Mammary epithelial cell (primary cell): ENCODE measurements at regions of chr2 and their contacts with region 1.

Region 1: DNA sequence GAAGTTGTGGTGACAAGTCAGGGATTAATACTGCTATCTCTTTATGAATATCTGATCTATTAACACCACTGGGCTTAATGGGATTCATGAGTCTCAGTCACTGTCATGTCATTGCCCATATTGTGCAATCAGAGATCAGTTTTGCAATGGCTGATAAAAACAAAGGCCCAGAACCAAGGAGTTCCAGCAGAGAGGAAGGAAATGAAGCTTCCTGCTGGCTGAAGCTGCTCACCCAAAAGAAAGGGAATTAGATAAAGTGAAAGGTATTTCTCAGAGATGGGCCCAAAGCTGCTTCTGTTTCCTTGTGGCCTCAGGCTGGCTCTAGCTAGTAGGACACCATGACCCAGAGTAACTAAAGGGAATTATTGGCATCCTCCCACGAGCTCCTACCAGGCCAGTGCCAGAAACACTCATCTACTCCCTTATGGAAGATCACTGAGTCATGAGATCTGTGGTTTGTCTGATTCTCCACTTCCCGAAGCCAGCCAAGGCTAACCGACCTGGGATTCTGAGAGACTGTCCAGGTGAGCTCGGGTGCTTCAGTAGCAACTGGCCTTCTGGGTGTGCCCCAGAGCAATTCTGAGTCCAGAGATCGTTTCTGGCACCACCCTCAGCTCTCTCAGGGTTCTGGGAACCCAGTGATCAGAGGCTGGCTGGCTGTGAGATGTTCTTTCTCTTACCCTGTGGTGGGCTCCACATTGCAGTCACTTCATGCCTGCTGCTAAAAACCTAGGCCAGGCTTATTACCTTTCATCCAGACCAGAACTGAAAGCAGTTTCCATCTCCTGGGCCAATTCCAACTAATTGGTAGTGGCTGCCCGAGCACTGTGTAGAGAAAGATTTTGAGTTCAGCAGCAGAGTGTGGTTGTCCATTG is 129.5 kb upstream of the PELI1 start:
- DNase-seq: peak; percentile 96
- H3K4me3 ChIP-seq: no peak overlapping the region
- H3K27ac ChIP-seq: peak overlapping the region; percentile 85
- H3K4me1 ChIP-seq: peaks cover 53% of the 10 kb centered on the region
- H3K27me3 ChIP-seq: no peaks in the 10 kb centered on the region
- CTCF ChIP-seq: no peak

Region 2: DNA sequence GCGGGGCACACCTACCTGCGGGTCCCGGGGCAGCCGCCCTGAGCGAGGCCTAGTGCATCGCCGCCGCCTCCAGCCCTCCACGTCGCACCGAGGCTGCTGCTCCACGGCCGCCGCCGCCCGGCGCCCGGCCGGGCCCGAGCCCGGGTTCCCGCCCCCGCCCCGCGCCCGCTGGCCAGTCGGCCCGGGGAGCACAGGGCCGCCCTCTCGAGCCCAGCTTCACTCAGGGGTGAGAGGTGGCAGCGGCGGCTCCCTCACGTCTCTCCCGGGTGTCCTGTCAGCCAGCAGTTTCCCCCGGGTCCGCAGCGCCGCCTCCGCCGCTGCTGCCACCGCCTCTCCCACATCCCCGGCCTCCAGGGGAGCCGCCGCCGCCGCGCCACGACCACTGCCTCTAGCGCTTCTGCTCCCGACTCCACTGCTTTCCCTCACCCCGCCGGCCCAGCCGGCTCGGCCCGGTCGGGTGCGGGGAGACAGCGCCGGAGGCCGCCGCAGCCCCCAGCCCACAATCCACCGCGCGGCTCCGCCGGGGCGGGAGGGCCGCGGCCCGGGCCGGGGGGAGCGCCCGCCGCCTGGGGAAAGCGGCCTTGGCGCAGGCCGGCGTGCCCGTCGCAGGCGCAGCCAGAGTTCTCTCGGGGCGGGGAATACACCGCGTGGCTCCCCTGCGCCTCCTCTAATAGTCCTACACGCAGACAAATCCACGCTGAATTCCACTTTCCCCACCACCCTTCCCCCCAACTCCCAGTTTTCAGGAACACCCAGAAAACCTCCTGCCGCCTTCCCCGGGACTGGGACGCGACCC is 254.6 kb before region 1 on chr2 and contains the start of gene VPS54:
- CTCF ChIA-PET with region 1: interaction called, 29 read pairs
- dilution Hi-C with region 1: no loop called
- in situ Hi-C with region 1: no loop called
- intact Hi-C with region 1: no loop called
- DNase-seq: peak; percentile 49
- H3K4me3 ChIP-seq: peak within 1 kb of the TSS; percentile 63 to 92 (median 63)
- H3K27ac ChIP-seq: peak within 1 kb of the TSS; percentile 88
- H3K4me1 ChIP-seq: peaks cover 10% of the 10 kb centered on the region
- H3K27me3 ChIP-seq: no peaks in the 10 kb centered on the region
- CTCF ChIP-seq: peak in 1 of 2 donors; percentile 0
- total RNA-seq, gene VPS54: 12.3 to 15.3 TPM

Region 3: DNA sequence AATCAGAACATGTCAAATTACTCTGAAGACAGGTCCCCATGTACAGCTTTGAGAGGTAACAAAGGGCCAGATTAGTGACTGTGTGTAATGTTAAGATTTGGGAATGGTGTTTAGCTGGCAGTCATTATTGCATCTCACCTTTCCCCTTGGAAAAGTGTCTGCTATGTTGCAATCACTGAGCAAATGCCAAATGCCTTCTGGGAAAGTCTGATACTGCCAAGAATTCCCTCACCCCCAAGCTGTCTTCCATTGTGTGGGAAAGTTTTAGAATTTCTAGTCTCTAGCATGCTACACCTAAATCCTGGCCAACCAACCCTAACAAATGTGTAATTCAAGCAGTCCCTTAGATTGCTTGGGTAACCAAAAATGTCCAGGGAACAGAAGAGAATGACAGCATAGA is 116.0 kb before region 1 on chr2:
- CTCF ChIA-PET with region 1: no interaction called
- dilution Hi-C with region 1: no loop called
- in situ Hi-C with region 1: no loop called
- intact Hi-C with region 1: no loop called
- DNase-seq: no peak
- H3K4me3 ChIP-seq: no peak overlapping the region
- H3K27ac ChIP-seq: no peak overlapping the region
- H3K4me1 ChIP-seq: no peaks in the 10 kb centered on the region
- H3K27me3 ChIP-seq: no peaks in the 10 kb centered on the region
- CTCF ChIP-seq: no peak